Gastrocnemius medialis (tissue), 4 donors: ENCODE measurements at regions of chr10 and their contacts with region 1.

Region 1: DNA sequence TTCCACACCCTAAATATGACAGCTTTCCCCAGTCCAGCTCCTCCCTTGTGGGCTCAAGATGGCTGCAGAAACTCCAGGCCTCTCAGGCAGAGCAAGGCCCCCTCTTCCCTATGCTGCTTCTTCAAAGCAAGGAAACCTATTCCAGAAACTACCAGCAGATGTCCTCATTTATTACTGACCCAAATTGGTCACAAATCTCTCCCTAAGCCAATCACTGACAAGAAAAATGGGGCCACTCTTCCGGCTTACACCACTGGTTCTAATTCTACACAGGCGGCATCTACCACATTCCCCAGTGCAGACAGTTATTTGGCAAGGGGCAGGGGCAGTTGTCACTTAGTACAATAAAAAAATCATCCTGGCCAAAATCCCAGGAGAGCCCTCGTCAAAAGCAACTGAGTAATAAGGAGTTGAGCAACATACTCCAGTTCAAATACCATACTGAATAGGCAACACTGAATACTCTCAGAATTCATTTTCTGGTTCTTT is 150.4 kb downstream of the SFMBT2 start:
- DNase-seq: peak; percentile 84 to 93
- ATAC-seq: peak; percentile 96 to 99
- H3K4me3 ChIP-seq: no peak overlapping the region
- H3K27ac ChIP-seq: peak overlapping the region; percentile 42 to 75 (median 60)
- H3K4me1 ChIP-seq: peaks cover 15 to 17% of the 10 kb centered on the region in 2 donors
- H3K27me3 ChIP-seq: no peaks in the 10 kb centered on the region
- CTCF ChIP-seq: peak; percentile 72 to 86 (median 78)
- POLR2A ChIP-seq: no peak

Region 2: DNA sequence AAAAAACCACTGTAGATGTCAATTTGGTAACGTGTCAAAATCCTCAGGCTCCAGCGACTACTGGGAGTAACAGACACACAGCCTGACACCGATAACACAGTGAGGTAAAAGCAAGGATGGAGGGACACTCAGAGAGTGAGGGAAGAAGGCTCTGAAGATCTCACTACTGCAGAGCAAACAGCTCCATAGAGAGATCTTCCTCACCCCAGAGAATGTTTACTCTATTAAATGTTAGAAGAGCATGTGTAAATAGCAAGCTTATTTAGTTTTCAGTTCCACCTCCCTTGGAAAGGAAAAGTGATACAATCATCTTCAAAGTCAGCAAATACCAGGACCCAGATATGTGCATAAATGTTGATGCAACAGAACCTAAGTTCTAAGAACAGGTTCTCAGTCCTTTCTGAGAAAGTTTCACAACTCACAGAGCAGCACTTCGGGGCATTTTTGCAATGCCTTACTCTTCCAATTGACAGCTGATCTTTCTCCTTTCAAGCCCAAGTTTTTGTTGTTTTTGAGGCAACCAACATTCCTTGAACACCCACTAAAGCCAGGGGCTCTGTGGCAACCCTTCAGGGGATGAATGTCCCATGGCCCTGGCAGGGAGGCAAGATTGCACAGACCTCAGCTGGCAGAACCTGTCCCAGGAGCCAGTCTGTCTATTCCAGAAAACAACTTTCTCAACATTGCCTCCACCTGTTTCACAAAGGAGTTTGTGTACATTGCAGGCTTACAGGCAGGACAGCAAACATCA is 27.0 kb before region 1 on chr10:
- in situ Hi-C with region 1: no loop called
- intact Hi-C with region 1: loop called (anchors 2 kb)
- DNase-seq: peak; percentile 33 to 79
- ATAC-seq: peak; percentile 78 to 96
- H3K4me3 ChIP-seq: no peak overlapping the region
- H3K27ac ChIP-seq: peak overlapping the region in 3 of 4 donors; percentile 57 to 73 (median 64)
- H3K4me1 ChIP-seq: peaks cover 4 to 18% of the 10 kb centered on the region in 2 donors
- H3K27me3 ChIP-seq: no peaks in the 10 kb centered on the region
- CTCF ChIP-seq: no peak
- POLR2A ChIP-seq: no peak